BJ (cell line): ENCODE measurements at regions of chr1 and their contacts with region 1.

Region 1: DNA sequence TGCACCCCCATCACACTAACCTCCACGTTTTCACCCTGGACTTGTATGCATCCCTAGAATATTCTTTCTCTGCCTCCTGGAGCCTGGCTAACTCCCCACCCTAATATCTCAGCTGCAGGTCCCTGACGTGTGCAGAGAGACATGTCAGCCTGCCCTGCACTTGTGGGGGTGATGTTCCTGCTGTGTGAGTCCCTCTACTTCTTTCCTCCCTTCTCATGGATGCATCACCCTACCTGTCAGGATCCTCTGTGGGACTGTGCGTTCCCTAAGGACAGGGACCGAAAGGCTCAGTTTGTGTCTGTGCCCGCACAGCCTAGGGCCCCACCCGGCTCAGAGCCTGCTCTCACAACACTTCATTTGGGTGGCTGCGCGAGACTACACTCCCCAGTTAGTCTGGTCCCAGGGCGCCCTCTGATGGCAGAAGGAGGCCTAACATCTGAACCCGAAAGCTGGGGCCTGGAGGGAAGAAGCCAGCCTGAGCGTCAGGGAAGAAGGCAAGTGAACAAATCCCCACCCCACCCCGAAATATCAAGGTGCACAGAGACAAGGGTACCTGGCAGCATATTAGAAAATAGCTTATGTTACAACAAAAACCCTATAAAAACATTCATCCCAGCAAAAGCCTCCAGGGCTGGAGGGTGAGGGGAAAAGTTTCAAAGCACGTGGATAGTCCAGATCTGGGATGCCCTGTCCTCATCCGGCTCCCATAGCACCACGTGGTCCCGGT is 3.7 kb downstream of the CD52 start:
- DNase-seq: peak; percentile 21
- H3K4me3 ChIP-seq: no peak overlapping the region
- H3K27me3 ChIP-seq: 0 out of 2 replicates have a peak, but pooled peaks cover 1% of the 10 kb centered on the region
- CTCF ChIP-seq: peak; percentile 94

Region 2: DNA sequence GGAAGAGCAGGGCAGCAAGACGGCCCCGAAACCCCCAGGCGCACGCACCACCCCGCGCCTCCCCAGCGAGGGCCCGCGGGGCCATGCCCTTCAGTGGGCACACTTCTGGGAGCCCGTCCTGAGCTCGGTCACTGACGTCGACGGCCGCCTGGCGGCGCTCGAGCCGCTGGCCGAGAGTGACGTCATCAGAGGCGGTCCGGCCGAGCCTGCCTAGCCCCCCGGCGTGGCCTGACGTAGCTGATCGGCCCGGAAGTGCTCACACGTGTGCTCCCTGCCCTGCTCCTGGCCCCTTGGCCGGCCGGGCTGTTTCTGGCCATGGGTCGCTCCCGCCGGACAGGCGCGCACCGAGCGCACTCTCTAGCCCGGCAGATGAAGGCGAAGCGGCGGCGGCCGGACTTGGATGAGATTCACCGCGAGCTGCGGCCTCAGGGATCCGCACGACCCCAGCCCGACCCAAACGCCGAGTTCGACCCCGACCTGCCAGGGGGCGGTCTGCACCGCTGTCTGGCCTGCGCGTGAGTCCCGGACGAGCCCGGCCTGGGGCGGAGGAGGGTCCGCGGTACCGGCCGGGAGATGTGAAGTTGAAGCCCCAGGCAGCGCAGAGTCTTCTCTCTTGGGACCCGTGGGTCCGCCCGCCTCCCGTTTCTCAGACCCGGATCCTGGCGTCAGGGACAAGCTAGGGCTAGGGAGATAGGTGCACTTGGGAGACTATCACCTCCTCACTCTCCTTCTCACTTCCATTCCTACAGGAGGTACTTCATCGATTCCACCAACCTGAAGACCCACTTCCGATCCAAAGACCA is 151.6 kb before region 1 on chr1 and contains the start of gene ZNF593:
- CTCF ChIA-PET with region 1: interaction called, 23 read pairs
- POLR2A ChIA-PET with region 1: no interaction called
- DNase-seq: peak; percentile 28
- H3K4me3 ChIP-seq: peak within 1 kb of the TSS; percentile 58
- H3K27me3 ChIP-seq: no peaks in the 10 kb centered on the region; the same call in 1 of the 2 replicates
- CTCF ChIP-seq: peak; percentile 93
- polyA plus RNA-seq, gene ZNF593: 26.3 and 30.2 TPM in 2 replicates

Region 3: GRCh38 chr1:26279456-26280332 is 41.8 kb before region 1 on chr1 and contains the start of gene SH3BGRL3:
- CTCF ChIA-PET with region 1: interaction called, 67 read pairs
- POLR2A ChIA-PET with region 1: no interaction called
- DNase-seq: peak; percentile 35
- H3K4me3 ChIP-seq: peak within 1 kb of the TSS; percentile 81
- H3K27me3 ChIP-seq: no peaks in the 10 kb centered on the region
- CTCF ChIP-seq: peak; percentile 73
- polyA plus RNA-seq, gene SH3BGRL3: 298 and 309 TPM in 2 replicates

Region 4: GRCh38 chr1:26306290-26307229 is 14.9 kb before region 1 on chr1 and contains the start of gene UBXN11:
- CTCF ChIA-PET with region 1: interaction called, 18 read pairs
- POLR2A ChIA-PET with region 1: no interaction called
- DNase-seq: peak; percentile 79
- H3K4me3 ChIP-seq: peak within 1 kb of the TSS; percentile 88
- H3K27me3 ChIP-seq: no peaks in the 10 kb centered on the region
- CTCF ChIP-seq: no peak
- polyA plus RNA-seq, gene UBXN11: 8.5 and 12.9 TPM in 2 replicates